ENCODE measurements at regions of chr4 and their contacts with region 1.

Region 1: GRCh38 chr4:25862411-25863346 is at the start of gene SEL1L3:
- DNase-seq: peak; percentile 37
- H3K4me3 Mint-ChIP-seq: peak within 1 kb of the TSS; percentile 99
- H3K27ac Mint-ChIP-seq: peak within 1 kb of the TSS; percentile 99
- H3K4me1 Mint-ChIP-seq: peaks cover 42% of the 10 kb centered on the region
- H3K27me3 Mint-ChIP-seq: no peaks in the 10 kb centered on the region
- total RNA-seq, gene SEL1L3: 36.0 and 37.1 TPM in 2 replicates

Region 2: GRCh38 chr4:25234390-25235370 is 628.0 kb before region 1 on chr4:
- intact Hi-C with region 1: loop called (anchors 10 kb)
- DNase-seq: peak; percentile 38
- H3K4me3 Mint-ChIP-seq: peak overlapping the region; percentile 92
- H3K27ac Mint-ChIP-seq: peak overlapping the region; percentile 98
- H3K4me1 Mint-ChIP-seq: peaks cover 37% of the 10 kb centered on the region
- H3K27me3 Mint-ChIP-seq: no peaks in the 10 kb centered on the region

Region 3: GRCh38 chr4:25439918-25440477 is 422.7 kb before region 1 on chr4:
- intact Hi-C with region 1: loop called (anchors 1 kb)
- DNase-seq: peak; percentile 49
- H3K4me3 Mint-ChIP-seq: no peak overlapping the region
- H3K27ac Mint-ChIP-seq: no peak overlapping the region
- H3K4me1 Mint-ChIP-seq: no peaks in the 10 kb centered on the region
- H3K27me3 Mint-ChIP-seq: peaks cover 4% of the 10 kb centered on the region

Region 4: GRCh38 chr4:25743971-25744370 is 118.7 kb before region 1 on chr4:
- intact Hi-C with region 1: no loop called
- DNase-seq: no peak
- H3K4me3 Mint-ChIP-seq: no peak overlapping the region
- H3K27ac Mint-ChIP-seq: no peak overlapping the region
- H3K4me1 Mint-ChIP-seq: no peaks in the 10 kb centered on the region
- H3K27me3 Mint-ChIP-seq: no peaks in the 10 kb centered on the region

Region 5: GRCh38 chr4:25842229-25842845 is 20.3 kb before region 1 on chr4:
- intact Hi-C with region 1: loop called (anchors 2 kb)
- DNase-seq: no peak
- H3K4me3 Mint-ChIP-seq: no peak overlapping the region
- H3K27ac Mint-ChIP-seq: peak overlapping the region; percentile 86
- H3K4me1 Mint-ChIP-seq: peaks cover 36% of the 10 kb centered on the region
- H3K27me3 Mint-ChIP-seq: no peaks in the 10 kb centered on the region

Region 6: GRCh38 chr4:25913851-25914669 is 51.4 kb after region 1 on chr4 and contains the start of gene SMIM20:
- intact Hi-C with region 1: loop called (anchors 1 kb)
- DNase-seq: peak; percentile 88
- H3K4me3 Mint-ChIP-seq: peak within 1 kb of the TSS; percentile 94
- H3K27ac Mint-ChIP-seq: peak within 1 kb of the TSS; percentile 99
- H3K4me1 Mint-ChIP-seq: peaks cover 24% of the 10 kb centered on the region
- H3K27me3 Mint-ChIP-seq: peaks cover 5% of the 10 kb centered on the region
- total RNA-seq, gene SMIM20: 19.2 and 21.5 TPM in 2 replicates

Region 7: DNA sequence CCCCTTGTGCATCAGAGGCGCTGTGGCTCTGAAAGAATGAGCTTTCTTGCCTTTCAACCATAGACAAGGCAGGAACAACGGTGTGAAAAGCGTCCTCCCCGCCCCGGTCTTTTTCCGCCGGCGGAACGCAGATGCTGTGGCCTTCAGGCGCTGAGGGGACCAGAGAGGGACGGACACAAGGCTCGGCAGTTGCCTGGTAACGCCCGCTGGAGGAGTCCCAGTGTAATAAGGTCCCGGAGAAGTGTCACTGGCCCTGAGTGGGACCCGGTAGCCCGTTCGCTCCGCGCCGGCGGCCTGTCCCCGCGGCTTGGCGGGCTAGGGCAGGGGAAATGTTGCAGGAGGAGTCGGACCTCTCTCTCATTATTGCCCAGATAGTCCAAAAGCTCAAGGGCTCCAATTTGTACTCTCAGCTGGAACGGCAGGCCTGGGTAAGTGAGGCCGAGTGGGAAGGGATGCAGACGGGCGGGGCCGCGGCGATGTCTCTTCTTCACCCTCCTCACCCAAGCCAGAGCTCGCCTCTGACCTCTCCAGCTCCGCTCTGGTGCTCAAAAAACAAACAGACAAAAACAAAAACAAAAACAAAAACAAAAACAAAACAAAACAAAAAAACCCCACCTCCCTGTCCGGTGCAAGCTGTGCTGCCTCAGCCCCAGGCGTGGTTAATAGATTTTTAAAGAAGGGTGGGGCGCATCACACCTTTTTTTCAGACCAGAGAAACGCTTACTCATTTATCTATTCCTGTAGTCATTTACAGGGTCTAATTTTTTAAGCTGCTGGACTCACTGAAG is 721.4 kb after region 1 on chr4 and contains the start of gene TBC1D19:
- intact Hi-C with region 1: loop called (anchors 10 kb)
- DNase-seq: peak; percentile 85
- H3K4me3 Mint-ChIP-seq: peak within 1 kb of the TSS; percentile 93
- H3K27ac Mint-ChIP-seq: peak within 1 kb of the TSS; percentile 93
- H3K4me1 Mint-ChIP-seq: peaks cover 37% of the 10 kb centered on the region
- H3K27me3 Mint-ChIP-seq: peaks cover 2% of the 10 kb centered on the region
- total RNA-seq, gene TBC1D19: 4.3 and 4.7 TPM in 2 replicates

Region 8: DNA sequence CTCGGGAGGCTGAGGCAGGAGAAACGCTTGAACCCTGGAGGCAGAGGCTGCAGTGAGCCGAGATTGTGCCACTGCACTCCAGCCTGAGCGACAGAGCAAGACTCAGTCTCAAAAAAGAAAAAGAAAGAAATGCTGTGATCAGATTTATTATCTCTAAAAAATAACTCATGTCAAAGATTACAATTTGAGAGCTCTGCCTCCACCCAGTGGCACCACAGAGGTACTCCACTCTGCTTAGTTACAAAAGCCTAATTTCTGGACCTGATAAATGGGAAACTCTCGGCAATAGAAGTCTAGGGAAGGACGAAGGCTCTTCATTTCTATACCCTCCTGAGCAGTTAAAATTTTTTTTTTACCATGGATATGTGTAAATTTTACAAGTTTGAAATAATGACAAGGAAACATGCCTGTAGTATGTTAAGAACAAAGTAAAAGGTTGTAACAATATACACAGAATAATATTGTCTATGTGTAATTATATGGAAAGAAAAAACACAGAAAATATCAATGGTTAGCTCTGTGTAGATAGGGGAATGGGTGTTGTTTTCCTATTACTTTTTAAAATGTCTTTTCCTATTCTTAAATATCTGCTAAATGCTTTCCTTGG is 1147.8 kb after region 1 on chr4:
- intact Hi-C with region 1: loop called (anchors 10 kb)
- DNase-seq: no peak
- H3K4me3 Mint-ChIP-seq: no peak overlapping the region
- H3K27ac Mint-ChIP-seq: no peak overlapping the region
- H3K4me1 Mint-ChIP-seq: peaks cover 4% of the 10 kb centered on the region
- H3K27me3 Mint-ChIP-seq: no peaks in the 10 kb centered on the region

Measured in activated T-helper 1 cell treated with anti-CD3 and anti-CD28 coated beads, Interleukin-12 subunit alpha, Interleukin-12 subunit beta, Interleukin-2, Interleukin-4 antibody, amounts not matched to agents 30 ng/mL and 10 ng/mL and 1 ng/mL, durations not matched to agents 14 hours and 24 hours and 36 hours (primary cell).